ENCODE measurements at regions of chr1 and their contacts with region 1.

Region 1: DNA sequence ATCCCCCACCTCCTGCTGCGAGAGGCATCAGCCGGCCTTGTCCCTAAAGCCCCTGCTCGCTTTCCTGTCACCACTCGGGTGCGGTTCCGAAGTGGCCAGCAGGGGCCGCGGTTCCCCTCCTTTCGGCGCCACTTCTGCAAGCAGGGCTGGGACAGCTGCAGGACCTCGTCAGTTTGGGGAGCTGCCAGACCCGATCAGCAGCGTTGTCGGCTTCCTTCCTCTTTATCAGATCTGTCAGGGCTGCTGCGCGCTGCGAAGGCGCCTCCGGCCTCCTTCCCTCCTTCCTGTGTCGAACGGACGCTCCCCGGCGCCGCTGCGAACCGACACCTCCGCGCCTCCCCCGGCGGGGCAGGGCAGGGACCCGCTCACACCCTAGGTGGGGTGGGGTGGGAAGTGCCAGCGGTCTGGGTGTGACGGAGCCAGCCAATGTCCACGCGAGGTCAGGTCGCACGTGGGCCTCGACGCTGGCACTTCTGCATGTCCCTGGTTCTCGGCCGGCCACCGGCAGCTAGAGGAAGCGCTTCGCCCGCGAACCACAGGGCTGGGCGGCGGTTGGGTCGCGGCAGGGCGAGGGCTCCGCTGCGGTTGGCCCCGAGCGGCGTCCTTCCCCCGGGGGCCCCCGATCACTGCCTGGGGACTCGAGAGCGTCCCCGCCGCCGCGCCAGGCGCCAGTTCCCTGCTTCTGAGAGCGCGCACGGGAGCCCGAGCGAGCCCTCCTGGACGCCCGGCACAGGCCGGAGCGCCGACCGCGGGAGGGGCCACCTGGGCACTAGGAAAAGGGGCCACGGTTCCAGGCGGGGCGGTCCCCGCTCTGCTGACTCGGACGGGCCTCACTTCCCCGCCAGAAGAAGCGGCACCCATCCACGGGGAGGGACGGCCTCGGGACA is 81.8 kb downstream of the RUNX3 start:
- DNase-seq: peak; percentile 42
- H3K4me3 ChIP-seq: peak overlapping the region; percentile 54
- CTCF ChIP-seq: peak; percentile 94

Region 2: GRCh38 chr1:24861821-24862727 is 13.8 kb after region 1 on chr1:
- CTCF ChIA-PET with region 1: interaction called, 32 read pairs
- POLR2A ChIA-PET with region 1: no interaction called
- DNase-seq: no peak
- H3K4me3 ChIP-seq: no peak overlapping the region
- CTCF ChIP-seq: peak; percentile 5

Region 3: DNA sequence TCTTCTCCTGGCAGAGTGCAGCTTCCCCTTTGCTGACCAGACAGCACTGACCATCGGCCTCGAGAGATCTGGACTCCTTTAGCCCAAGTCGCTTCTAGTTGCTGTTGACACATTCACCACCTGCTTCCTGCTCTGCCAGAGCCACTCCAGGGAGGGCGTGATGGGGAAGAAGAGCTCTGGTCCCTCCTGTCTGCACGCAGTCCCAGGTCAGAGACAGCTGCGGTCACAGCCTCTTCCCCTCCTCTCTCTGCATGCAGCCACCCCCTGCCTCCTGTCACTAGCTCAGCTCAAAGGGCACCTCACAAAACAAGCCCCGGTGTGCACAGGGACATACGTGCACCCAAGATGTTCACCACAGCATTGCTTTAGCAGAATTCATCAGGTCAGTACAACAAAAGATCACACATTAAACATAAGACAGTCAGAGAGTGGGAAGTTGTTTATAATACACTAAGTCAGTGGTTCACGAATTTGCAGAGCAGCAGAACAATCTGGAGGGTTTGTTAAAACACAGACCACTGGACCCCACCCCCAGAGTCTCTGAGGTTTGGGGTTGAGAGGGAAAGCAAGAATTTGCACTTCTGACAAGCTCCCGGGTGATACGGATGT is 251.2 kb after region 1 on chr1:
- CTCF ChIA-PET with region 1: interaction called, 15 read pairs
- POLR2A ChIA-PET with region 1: no interaction called
- DNase-seq: no peak
- H3K4me3 ChIP-seq: no peak overlapping the region
- CTCF ChIP-seq: no peak

Measured in AG04449 (cell line).